Activated B cell treated with CpG ODN at 0.5 μM for 24 hours (primary cell): ENCODE measurements at regions of chr10 and their contacts with region 1.

Region 1: GRCh38 chr10:931416-932318 is at the start of gene LARP4B:
- DNase-seq: peak; percentile 99
- ATAC-seq: peak; percentile 96
- H3K4me3 Mint-ChIP-seq: peak within 1 kb of the TSS; percentile 89
- H3K27ac Mint-ChIP-seq: peak within 1 kb of the TSS; percentile 87
- H3K4me1 Mint-ChIP-seq: peaks cover 48% of the 10 kb centered on the region
- H3K27me3 Mint-ChIP-seq: peaks cover 5% of the 10 kb centered on the region
- CTCF ChIP-seq: no peak
- total RNA-seq, gene LARP4B: 98.2 and 103 TPM in 2 replicates

Region 2: DNA sequence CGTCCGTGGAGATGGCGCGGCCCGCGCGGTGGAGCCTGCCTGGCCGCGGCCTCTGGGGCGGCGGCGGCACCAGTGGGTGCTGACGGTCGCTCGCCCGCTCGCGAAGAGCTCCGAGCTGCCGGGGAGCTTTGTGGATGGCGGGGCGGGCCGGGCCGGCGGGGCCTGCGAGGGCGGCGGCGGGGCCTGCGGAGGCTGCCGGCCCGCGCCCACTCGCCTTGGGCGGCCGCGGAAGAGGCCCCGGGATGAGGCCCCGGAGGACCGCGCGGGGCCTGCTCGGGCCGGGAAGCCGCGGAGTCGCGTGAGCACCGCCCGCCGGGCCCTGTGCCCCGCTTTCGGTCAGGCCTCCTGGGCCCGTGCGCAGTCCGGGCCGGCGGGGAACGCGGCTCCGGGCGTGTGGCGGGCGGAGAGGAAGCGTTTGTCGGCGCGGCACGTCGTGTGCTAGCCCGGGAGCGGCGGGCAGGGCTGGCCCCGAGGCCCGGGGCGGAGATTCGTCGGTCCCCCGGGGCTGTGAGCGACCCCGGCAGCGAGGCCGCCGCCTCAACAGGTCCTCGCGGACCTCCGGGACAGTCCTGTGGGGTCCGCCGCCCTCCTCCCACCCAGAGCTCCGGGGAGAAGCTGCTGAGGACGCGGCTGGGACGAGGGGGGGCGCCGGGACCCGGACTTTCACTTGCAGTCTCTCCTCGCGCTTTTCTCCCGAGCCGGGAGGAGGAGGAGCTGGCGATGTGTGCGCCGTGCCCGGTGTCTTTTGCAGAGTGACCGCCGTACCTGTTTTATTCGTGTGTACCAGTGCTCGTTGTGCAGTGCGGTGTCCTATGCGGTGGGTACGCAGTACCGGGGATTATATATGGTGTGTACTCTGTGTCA is 795.8 kb before region 1 on chr10:
- CTCF ChIA-PET with region 1: no interaction called
- POLR2A ChIA-PET with region 1: no interaction called
- intact Hi-C with region 1: loop called (anchors 2 kb)
- DNase-seq: peak; percentile 73
- ATAC-seq: peak; percentile 51
- H3K4me3 Mint-ChIP-seq: peak overlapping the region; percentile 77
- H3K27ac Mint-ChIP-seq: peak overlapping the region; percentile 60
- H3K4me1 Mint-ChIP-seq: peaks cover 28% of the 10 kb centered on the region
- H3K27me3 Mint-ChIP-seq: peaks cover 4% of the 10 kb centered on the region
- CTCF ChIP-seq: no peak

Region 3: GRCh38 chr10:944034-944831 is 12.6 kb after region 1 on chr10:
- CTCF ChIA-PET with region 1: no interaction called
- POLR2A ChIA-PET with region 1: interaction called, 20 read pairs
- intact Hi-C with region 1: no loop called
- DNase-seq: no peak
- ATAC-seq: peak; percentile 70
- H3K4me3 Mint-ChIP-seq: peak overlapping the region; percentile 57
- H3K27ac Mint-ChIP-seq: peak overlapping the region; percentile 61
- H3K4me1 Mint-ChIP-seq: peaks cover 18% of the 10 kb centered on the region
- H3K27me3 Mint-ChIP-seq: peaks cover 4% of the 10 kb centered on the region
- CTCF ChIP-seq: no peak

Region 4: DNA sequence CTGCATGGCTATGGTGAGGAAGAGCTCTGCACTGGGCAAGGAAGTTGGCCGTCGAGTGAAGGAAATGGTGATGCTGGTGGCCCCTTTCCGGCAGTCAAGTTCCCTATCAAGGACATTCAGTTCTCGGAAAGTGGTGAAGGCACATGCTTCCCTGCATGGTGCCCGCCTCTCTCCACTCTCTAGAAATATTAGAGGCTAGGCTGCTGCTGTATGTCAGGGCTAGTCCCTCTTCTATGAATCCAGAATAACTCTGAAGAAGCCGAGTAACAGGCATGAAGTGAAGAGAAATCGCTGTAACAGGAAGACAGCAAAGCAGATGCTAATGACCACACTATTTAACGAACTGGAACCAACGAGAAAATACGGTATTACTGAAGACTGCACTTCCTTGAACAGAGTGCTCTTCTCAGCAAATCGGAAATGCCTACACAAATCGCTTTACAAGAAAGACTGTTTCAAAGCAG is 111.9 kb after region 1 on chr10:
- CTCF ChIA-PET with region 1: interaction called, 3 read pairs
- POLR2A ChIA-PET with region 1: interaction called, 45 read pairs
- intact Hi-C with region 1: no loop called
- DNase-seq: peak; percentile 25
- ATAC-seq: peak; percentile 66
- H3K4me3 Mint-ChIP-seq: peak overlapping the region; percentile 84
- H3K27ac Mint-ChIP-seq: peak overlapping the region; percentile 97
- H3K4me1 Mint-ChIP-seq: peaks cover 48% of the 10 kb centered on the region
- H3K27me3 Mint-ChIP-seq: no peaks in the 10 kb centered on the region
- CTCF ChIP-seq: no peak

Region 5: GRCh38 chr10:1056326-1057105 is 124.8 kb after region 1 on chr10 and contains the start of gene WDR37:
- CTCF ChIA-PET with region 1: no interaction called
- POLR2A ChIA-PET with region 1: interaction called, 9 read pairs
- intact Hi-C with region 1: loop called (anchors 1 kb)
- DNase-seq: peak; percentile 94
- ATAC-seq: peak; percentile 89
- H3K4me3 Mint-ChIP-seq: peak within 1 kb of the TSS; percentile 94
- H3K27ac Mint-ChIP-seq: peak within 1 kb of the TSS; percentile 92
- H3K4me1 Mint-ChIP-seq: peaks cover 74% of the 10 kb centered on the region
- H3K27me3 Mint-ChIP-seq: no peaks in the 10 kb centered on the region
- CTCF ChIP-seq: no peak
- total RNA-seq, gene WDR37: 16.2 and 20.0 TPM in 2 replicates

Region 6: GRCh38 chr10:1123198-1123597 is 191.5 kb after region 1 on chr10:
- CTCF ChIA-PET with region 1: no interaction called
- POLR2A ChIA-PET with region 1: no interaction called
- intact Hi-C with region 1: no loop called
- DNase-seq: no peak
- ATAC-seq: no peak
- H3K4me3 Mint-ChIP-seq: no peak overlapping the region
- H3K27ac Mint-ChIP-seq: no peak overlapping the region
- H3K4me1 Mint-ChIP-seq: peaks cover 4% of the 10 kb centered on the region
- H3K27me3 Mint-ChIP-seq: no peaks in the 10 kb centered on the region
- CTCF ChIP-seq: no peak